Adrenal gland (tissue), 19 donors: ENCODE measurements at regions of chr4 and their contacts with region 1.

Region 1: DNA sequence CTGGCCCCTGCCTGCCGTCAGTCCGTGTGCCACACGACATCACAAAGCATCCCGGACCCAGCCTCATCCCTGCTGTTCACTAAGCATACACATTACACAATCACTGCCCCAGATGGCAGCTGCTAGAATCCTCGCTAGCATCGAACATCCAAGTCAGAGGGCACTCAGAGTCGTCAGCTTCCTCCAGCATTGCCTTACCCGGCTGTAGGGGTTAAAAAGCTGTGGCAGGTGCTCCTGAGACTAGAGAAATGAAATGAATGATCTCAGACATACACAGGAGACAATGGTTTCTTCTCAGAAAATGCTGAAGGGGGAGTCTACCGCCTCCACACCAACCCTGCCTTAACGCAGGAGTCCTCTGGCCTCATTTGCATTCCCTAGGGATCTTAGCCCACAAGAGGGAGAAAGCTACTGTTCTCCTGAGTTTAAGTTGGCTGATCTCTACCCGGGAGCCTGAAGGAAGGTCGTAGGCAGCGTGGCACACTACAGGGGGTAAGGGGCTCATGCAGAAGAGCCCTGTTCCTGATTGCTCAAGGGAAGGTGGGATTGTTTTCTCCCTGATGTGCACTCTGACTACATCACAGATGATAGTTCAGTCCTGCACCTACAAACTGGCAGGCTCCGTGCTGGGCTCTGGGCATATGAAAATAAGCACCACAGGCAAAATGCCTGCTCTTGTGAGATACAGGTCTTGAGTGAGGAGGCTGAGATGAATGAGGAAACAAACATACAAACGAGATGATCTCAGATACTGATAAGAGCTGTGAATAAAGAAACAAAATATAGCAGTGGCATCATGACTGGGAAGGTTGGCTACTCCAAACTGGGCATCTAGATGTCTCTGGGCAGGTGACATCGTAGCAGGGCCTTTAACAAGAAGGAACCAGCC is 2.6 kb upstream of the KIAA0232 start:
- DNase-seq: peak in 2 of 7 donors; percentile 11 to 17
- H3K4me3 ChIP-seq: no peak overlapping the region
- H3K27ac ChIP-seq: no peak overlapping the region
- H3K4me1 ChIP-seq: peaks cover 6 to 16% of the 10 kb centered on the region in 2 donors
- H3K27me3 ChIP-seq: no peaks in the 10 kb centered on the region
- CTCF ChIP-seq: no peak
- POLR2A ChIP-seq: no peak

Region 2: GRCh38 chr4:6873792-6874461 is 94.0 kb after region 1 on chr4:
- intact Hi-C with region 1: loop called in 1 of 2 experiments (anchors 5 kb)
- DNase-seq: peak; percentile 73 to 90 (median 82)
- H3K4me3 ChIP-seq: no peak overlapping the region
- H3K27ac ChIP-seq: no peak overlapping the region
- H3K4me1 ChIP-seq: no peaks in the 10 kb centered on the region
- H3K27me3 ChIP-seq: no peaks in the 10 kb centered on the region
- CTCF ChIP-seq: peak; percentile 76 to 86 (median 82)
- POLR2A ChIP-seq: no peak